ENCODE measurements at regions of chr6 and their contacts with region 1.

Region 1: DNA sequence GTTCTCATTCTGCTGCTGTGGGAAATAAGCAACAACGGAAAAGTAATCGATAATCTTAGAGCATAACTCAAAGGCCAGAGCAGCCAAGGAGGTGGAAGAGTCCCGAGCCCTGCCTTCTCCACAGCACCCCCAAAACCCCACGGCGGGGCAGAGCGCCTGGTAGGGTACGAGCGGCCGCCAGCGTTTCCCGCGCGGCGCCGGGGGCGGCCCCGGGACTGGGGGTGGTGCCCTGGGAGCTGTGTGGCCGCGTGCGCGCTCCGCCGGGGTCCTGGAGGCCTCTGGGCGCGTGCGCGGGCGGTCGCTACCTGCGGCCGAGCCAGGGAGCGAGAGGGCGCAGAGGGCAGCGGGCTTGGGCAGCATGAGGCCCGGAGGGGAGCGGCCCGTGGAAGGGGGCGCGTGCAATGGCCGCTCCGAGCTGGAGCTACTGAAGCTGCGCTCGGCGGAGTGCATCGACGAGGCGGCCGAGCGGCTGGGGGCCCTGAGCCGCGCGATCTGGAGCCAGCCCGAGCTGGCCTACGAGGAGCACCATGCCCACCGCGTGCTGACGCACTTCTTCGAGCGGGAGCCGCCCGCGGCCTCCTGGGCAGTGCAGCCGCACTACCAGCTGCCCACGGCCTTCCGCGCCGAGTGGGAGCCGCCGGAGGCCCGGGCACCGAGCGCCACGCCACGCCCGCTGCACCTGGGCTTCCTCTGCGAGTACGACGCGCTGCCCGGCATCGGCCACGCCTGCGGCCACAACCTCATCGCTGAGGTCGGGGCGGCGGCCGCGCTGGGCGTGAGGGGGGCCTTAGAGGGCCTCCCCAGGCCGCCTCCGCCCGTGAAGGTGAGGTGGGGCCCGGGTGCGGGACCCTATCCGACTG is at the start of gene PM20D2:
- DNase-seq: peak; percentile 83
- CTCF ChIP-seq: no peak

Region 2: GRCh38 chr6:88963139-88964090 is 182.6 kb before region 1 on chr6 and contains the start of gene RNGTT:
- CTCF ChIA-PET with region 1: no interaction called
- POLR2A ChIA-PET with region 1: no interaction called
- DNase-seq: peak; percentile 99
- CTCF ChIP-seq: no peak

Region 3: DNA sequence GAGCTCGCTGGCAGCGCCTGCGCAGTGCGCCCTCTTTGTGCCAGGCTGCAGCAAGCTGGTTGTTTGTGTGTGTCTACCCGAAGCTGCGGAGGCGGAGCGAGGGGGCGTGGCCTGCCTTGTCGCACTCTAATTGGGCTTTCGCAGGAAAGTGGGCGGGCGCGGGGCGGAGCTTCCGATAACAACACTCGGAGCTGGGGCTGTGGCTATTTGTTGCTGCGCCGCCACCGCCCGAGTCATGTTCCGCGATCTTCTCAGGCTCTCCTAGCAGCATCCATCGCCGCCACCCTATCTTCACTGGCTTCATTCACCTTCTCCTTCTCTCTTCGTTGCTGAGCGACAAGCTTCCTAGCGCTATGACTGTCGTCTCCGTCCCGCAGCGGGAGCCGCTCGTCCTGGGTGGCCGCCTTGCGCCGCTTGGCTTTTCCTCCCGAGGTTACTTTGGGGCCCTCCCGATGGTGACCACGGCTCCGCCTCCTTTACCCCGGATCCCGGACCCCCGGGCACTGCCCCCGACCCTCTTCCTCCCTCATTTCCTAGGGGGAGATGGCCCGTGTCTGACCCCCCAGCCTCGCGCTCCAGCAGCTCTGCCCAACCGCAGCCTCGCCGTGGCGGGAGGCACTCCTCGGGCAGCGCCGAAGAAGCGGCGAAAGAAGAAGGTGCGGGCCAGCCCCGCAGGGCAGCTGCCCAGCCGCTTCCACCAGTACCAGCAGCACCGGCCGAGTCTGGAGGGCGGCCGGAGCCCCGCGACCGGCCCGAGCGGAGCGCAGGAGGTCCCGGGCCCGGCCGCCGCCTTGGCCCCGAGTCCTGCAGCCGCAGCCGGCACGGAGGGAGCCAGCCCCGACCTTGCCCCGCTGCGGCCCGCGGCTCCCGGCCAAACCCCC is 65.2 kb before region 1 on chr6 and contains the start of gene PNRC1:
- CTCF ChIA-PET with region 1: interaction called, 3 read pairs
- POLR2A ChIA-PET with region 1: interaction called, 17 read pairs
- DNase-seq: peak; percentile 96
- CTCF ChIP-seq: no peak

Region 4: GRCh38 chr6:89132057-89132456 is 14.0 kb before region 1 on chr6:
- CTCF ChIA-PET with region 1: interaction called, 10 read pairs
- POLR2A ChIA-PET with region 1: no interaction called
- DNase-seq: no peak
- CTCF ChIP-seq: no peak

Region 5: DNA sequence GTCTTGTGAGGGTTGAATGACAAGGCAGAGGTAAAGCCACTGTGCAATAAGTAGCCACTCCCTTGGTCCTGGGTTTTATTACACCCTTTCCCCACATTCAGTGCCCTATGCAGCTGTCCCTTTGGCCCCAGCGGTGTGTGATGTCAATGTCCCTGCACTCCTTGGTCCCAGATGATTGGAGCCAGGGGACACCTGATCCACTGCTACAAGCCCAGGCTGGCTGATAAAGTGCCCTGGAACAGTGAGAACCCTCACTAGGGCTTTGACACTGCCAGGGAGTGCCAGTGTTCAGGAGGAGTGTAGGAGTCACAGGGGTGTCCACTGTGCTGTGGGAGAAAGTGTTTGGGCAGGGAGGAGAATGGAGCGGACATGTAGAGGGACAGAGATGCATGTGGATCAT is 40.7 kb after region 1 on chr6:
- CTCF ChIA-PET with region 1: no interaction called
- POLR2A ChIA-PET with region 1: no interaction called
- DNase-seq: no peak
- CTCF ChIP-seq: no peak

Region 6: GRCh38 chr6:89454301-89454700 is 308.3 kb after region 1 on chr6:
- CTCF ChIA-PET with region 1: no interaction called
- POLR2A ChIA-PET with region 1: no interaction called
- DNase-seq: no peak
- CTCF ChIP-seq: no peak

Measured in GM10248 (cell line).